ENCODE measurements at regions of chr12 and their contacts with region 1.

Region 1: DNA sequence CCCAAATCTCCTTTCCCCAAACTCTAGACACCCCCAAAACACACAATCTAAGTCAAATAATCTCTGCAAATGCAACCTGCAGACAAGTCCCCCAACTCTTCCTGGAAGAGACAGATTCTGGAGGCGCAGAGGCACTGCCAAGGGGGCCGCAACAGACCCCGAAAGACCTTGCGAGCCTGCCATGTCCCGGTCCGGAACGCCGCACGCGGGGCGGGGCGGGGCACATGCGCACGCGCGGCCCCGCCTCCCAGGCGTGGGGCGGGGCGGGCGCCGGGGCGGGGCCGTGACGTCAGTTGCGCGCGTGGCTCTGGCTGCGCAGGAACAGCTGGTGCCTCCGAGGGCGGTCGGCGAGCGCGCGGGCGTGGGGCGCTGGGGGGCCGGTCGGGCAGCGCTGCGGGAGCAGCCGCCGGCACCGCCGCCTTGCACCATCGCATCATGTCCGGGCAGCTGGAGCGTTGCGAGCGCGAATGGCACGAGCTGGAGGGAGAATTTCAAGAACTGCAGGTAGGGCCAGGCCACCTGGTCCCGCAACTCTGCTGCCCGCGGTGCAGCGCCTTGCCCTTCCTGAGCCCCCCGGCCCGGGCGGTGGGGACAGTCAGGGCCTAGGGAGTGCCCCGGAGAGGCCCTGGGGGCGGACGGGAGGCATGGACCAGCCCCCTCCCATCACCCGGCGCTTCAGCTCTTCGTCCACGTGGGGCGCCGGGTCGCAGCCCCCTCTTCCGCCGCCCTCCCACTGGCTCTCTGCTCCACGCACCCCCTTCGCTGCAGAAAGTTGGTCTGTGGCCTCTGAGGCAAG is at the start of gene TMEM120B:
- DNase-seq: peak; percentile 85
- ATAC-seq: peak; percentile 87
- H3K4me3 Mint-ChIP-seq: peak within 1 kb of the TSS; percentile 96
- H3K27ac Mint-ChIP-seq: peak within 1 kb of the TSS; percentile 89
- H3K4me1 Mint-ChIP-seq: peaks cover 38% of the 10 kb centered on the region
- H3K27me3 Mint-ChIP-seq: no peaks in the 10 kb centered on the region
- total RNA-seq, gene TMEM120B: 7.6 to 8.2 TPM

Region 2: DNA sequence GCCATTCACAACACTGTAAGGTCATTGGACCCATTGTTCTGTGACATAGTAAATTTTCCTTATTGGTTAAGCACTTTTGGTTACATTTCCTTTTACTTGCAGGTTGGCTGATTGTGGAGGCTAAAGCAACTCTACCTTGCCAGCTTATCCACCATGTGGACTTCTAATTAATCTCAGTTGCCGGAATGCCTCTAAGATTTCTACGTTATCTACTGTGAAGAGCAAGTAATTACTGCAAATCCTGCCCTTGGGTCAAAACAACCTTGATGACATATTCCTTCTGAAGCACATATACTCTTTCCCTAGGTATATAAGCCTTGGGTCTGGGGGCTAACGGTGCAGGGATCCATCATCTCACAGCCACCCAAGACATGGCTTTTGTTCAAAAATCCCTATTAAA is 23.7 kb before region 1 on chr12:
- CTCF ChIA-PET with region 1: interaction called, 11 read pairs
- POLR2A ChIA-PET with region 1: no interaction called
- DNase-seq: no peak
- ATAC-seq: no peak
- H3K4me3 Mint-ChIP-seq: no peak overlapping the region
- H3K27ac Mint-ChIP-seq: peak overlapping the region; percentile 34
- H3K4me1 Mint-ChIP-seq: peaks cover 14% of the 10 kb centered on the region
- H3K27me3 Mint-ChIP-seq: no peaks in the 10 kb centered on the region

Region 3: DNA sequence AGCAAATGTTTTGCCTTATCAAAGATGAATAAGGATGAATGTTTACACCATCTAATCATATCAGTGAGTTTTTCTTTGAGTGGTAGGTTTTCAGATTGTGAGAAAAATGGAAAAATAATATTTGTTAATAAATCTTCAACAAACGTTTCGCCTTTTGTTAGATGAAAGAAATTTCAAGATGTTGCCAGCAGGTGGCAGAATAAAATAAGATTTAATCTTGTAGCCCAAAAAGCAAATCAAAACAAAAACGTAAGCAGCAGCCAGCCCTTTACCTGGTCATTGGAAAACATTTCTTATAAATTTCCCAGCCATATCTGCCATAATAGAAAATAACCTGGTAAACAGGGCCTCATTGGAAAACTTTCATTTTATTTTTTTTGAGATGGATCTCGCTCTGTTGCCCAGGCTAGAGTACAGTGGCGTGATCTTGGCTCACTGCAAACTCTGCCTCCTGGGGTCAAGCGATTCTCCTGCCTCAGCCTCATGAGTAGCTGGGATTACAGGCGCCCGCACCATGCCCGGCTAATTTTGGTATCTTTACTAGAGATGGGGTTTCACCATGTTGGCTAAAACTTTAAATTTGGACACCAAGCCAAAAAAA is 15.5 kb before region 1 on chr12:
- CTCF ChIA-PET with region 1: interaction called, 11 read pairs
- POLR2A ChIA-PET with region 1: no interaction called
- DNase-seq: peak; percentile 62
- ATAC-seq: no peak
- H3K4me3 Mint-ChIP-seq: no peak overlapping the region
- H3K27ac Mint-ChIP-seq: no peak overlapping the region
- H3K4me1 Mint-ChIP-seq: peaks cover 4% of the 10 kb centered on the region
- H3K27me3 Mint-ChIP-seq: peaks cover 9% of the 10 kb centered on the region

Region 4: DNA sequence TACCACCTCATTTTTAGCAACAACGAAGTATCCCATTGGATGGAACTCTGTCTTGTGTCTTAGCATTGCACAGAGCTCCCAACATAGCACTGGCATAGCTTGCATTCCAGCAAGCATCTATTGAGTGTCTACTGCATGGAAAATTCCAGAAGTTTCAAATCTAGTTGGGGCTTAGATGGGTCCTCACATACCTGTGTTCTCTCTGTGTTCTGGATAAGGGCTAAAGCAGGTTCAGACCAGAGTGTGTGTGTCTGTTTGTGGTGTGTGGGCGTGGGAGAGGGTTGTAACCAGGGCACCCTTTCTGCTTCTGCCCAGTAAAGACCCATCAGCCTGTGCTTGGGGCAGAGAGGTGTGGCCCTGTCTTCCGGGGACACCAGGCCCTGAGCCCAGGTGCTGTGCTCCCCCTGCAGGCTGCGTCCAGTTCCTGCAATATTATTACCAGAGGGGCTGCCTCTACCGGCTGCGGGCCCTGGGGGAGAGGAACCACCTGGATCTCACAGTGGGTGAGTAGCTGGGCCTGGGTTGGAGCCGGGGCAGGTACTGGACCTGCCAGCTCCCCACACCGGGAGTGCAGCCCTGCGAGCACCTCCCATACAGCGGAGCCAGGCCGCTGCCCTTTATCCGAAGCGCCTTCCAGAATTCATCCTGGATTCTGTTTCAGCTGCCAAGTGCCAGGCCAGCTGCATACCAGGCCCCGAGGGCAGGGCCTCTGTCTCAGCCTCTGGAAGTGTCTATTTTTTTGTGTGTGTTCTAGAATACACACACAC is 60.5 kb after region 1 on chr12:
- CTCF ChIA-PET with region 1: interaction called, 31 read pairs
- POLR2A ChIA-PET with region 1: interaction called, 4 read pairs
- DNase-seq: peak; percentile 90
- ATAC-seq: peak; percentile 87
- H3K4me3 Mint-ChIP-seq: no peak overlapping the region
- H3K27ac Mint-ChIP-seq: peak overlapping the region; percentile 69
- H3K4me1 Mint-ChIP-seq: peaks cover 23% of the 10 kb centered on the region
- H3K27me3 Mint-ChIP-seq: no peaks in the 10 kb centered on the region

Region 5: GRCh38 chr12:121802846-121803630 is 90.4 kb after region 1 on chr12:
- CTCF ChIA-PET with region 1: interaction called, 7 read pairs
- POLR2A ChIA-PET with region 1: interaction called, 12 read pairs
- DNase-seq: peak; percentile 93
- ATAC-seq: peak; percentile 61
- H3K4me3 Mint-ChIP-seq: peak overlapping the region; percentile 91
- H3K27ac Mint-ChIP-seq: peak overlapping the region; percentile 98
- H3K4me1 Mint-ChIP-seq: peaks cover 29% of the 10 kb centered on the region
- H3K27me3 Mint-ChIP-seq: no peaks in the 10 kb centered on the region

Region 6: DNA sequence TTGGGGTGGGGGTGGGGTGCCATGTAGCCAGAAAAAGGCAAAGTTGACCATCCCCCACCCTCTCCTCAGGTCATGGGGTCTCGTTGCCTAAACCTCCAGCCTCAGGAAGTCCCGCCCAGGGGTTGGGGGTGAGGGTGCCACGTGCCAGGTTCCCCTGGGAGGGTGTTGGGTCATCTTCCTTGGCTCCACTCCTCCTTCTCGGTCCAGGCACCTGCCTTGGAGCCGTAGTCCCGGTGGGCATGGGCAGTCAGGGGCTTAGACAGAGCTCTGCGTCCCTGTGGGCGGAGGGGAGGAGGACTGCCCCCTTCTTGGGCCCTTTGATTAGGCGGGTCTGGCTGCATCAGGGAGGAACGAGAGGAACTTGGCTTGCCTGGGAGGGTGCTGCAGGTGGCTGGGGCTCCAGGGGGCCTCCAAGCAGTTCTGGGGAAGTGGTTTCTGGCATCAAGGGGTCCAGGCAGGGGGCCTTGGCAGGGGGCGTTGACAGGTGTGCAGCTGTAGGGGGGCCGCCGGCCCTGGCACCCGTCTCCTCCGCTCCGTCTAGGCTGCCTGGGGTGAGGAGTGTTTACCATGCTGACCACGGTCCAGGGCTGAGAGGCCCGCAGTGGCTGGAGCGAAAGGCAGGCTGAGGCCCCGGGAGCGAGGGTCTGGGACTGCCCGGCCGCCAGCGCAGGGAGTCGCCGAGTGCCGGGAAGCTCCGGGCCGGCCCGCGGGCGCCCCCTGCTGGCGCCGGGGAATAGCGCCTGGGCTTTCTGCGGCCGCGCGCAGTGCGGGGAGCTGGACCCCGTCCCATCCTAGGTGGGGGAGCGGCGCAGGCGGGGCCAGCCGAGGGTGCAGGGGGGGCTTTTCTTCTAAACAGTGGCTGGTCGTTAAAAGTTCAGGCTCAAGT is 99.0 kb after region 1 on chr12:
- CTCF ChIA-PET with region 1: interaction called, 12 read pairs
- POLR2A ChIA-PET with region 1: interaction called, 5 read pairs
- DNase-seq: peak; percentile 71
- ATAC-seq: peak; percentile 83
- H3K4me3 Mint-ChIP-seq: peak overlapping the region; percentile 65
- H3K27ac Mint-ChIP-seq: peak overlapping the region; percentile 62
- H3K4me1 Mint-ChIP-seq: peaks cover 52% of the 10 kb centered on the region
- H3K27me3 Mint-ChIP-seq: no peaks in the 10 kb centered on the region

Measured in activated CD8-positive, alpha-beta T cell treated with anti-CD3 and anti-CD28 coated beads, Interleukin-2, amount 10 ng/mL, durations not matched to agents 7 days and 5 days (primary cell).